GM13977 (cell line): ENCODE measurements at regions of chr15 and their contacts with region 1.

Region 1: DNA sequence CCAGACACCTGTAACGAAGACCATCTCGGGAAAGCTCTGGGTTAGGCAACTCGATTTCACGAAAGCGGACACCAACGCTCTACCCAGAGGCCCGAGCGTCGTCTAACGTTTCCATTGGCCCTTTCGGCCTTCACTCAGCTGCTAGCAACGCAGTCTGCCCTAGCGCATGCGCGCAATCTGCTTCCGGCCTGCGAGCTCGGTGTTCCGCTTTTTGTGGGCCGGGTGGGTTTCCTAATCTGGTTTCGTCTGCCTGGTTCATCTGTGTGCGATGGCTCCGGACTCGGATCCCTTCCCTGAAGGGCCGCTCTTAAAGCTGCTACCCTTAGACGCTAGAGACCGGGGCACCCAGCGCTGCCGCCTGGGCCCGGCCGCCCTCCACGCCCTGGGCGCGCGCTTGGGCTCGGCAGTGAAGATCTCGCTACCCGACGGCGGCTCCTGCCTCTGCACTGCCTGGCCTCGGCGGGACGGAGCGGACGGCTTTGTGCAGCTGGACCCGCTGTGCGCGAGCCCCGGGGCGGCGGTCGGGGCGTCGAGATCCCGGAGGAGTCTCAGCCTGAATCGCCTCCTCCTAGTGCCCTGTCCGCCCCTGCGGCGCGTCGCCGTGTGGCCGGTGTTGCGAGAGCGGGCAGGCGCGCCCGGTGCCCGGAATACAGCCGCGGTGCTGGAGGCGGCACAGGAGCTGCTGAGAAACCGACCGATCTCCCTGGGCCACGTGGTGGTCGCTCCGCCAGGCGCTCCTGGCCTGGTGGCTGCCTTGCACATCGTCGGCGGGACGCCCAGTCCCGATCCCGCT is 24.0 kb upstream of the GATM start:
- DNase-seq: peak; percentile 97
- CTCF ChIP-seq: no peak

Region 2: DNA sequence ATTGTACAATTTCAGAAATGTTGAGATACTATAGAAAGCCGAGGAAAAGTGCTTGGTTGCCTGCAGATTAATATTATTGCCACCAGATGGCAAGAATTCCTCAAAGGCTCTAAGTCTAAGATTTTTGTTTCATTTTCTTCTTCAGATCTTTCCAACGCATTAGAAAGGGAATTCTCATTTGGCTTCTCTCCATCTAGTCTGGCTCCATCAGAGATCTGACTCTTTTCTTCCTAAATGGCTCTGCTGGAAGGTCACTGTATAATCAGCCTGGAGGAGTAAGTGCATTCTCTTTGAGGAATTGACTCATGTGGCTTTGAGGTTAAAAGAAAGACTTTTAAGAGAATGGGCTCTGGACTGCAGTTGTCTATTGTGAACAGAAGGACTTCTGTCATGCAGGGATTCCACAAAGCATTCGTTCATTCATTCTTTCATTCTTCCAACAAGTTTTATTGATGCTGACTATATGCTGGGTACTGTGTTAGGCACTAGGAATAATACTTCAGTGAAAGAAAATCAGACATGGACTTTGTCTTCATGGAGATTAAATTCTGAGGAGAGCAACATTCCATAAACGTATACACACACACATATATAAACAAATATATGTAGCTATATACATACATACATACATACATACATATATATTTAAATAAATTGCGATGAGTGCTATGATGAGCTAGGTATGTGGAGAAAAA is 95.0 kb before region 1 on chr15:
- in situ Hi-C with region 1: loop called (anchors 5 kb)
- DNase-seq: peak; percentile 52
- CTCF ChIP-seq: peak; percentile 52